ENCODE measurements at regions of chr20 and their contacts with region 1.

Region 1: DNA sequence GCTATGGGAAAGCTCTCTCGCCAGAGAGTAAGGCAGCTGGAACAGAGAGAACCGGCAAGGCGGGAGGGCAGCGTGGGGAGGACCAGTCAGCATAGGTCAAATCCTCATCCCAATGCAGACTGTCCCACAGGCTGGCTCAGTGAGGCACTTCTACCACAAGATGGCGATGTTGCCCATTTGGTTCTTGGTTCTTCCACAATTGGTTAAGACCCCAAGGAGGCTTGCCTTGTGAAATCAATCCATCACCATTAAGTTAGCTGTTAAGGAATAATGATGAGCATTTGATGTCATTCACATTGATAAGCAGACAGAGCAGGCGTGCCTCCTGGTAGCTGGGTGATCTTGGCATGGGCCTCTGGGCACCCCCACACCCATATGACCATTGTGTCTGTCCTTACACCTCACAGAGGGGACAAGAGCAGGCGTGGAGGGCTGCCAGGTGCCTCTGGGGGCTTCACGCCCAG is 2.4 kb downstream of the CSTL1 start:
- DNase-seq: peak; percentile 31 to 72
- ATAC-seq: peak; percentile 59 to 82 (median 75)
- H3K4me3 ChIP-seq: no peak overlapping the region
- H3K27ac ChIP-seq: no peak overlapping the region
- H3K4me1 ChIP-seq: peaks cover 0 to 3% (median 0%) of the 10 kb centered on the region in 9 donors
- H3K27me3 ChIP-seq: no peaks in the 10 kb centered on the region
- CTCF ChIP-seq: peak; percentile 70 to 92 (median 86)

Region 2: GRCh38 chr20:22346716-22347115 is 1095.2 kb before region 1 on chr20:
- intact Hi-C with region 1: loop called in 1 of 10 experiments (anchors 10 kb)
- DNase-seq: no peak
- ATAC-seq: no peak
- H3K4me3 ChIP-seq: no peak overlapping the region
- H3K27ac ChIP-seq: no peak overlapping the region
- H3K4me1 ChIP-seq: no peaks in the 10 kb centered on the region
- H3K27me3 ChIP-seq: peaks cover 0 to 60% (median 41%) of the 10 kb centered on the region in 7 donors
- CTCF ChIP-seq: no peak

Region 3: DNA sequence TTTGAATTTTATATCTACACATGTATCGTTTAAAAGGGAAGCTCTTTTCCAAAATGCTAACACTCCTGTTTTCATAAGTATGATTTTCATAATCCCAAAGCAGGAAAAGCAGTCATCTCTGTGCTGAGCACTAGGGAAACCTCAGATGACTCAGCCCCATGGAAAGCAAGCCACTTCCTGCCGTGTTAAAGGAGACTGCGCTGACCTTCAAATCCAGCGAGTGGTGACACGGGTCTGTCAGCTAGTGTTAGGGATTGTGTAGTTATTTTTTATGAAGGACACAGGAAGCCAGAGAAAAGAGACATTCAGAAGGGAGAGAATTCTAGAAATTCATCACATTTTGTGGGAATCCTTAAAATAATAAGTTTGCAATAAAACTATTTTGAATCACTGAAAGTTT is 298.8 kb before region 1 on chr20:
- intact Hi-C with region 1: no loop called
- DNase-seq: peak in 1 of 2 donors; percentile 82
- ATAC-seq: peak; percentile 87 to 97 (median 92)
- H3K4me3 ChIP-seq: no peak overlapping the region
- H3K27ac ChIP-seq: peak overlapping the region in 9 of 10 donors; percentile 57 to 95 (median 76)
- H3K4me1 ChIP-seq: peaks cover 10 to 72% (median 34%) of the 10 kb centered on the region in 9 donors
- H3K27me3 ChIP-seq: no peaks in the 10 kb centered on the region
- CTCF ChIP-seq: peak in 1 of 9 donors; percentile 11

Region 4: DNA sequence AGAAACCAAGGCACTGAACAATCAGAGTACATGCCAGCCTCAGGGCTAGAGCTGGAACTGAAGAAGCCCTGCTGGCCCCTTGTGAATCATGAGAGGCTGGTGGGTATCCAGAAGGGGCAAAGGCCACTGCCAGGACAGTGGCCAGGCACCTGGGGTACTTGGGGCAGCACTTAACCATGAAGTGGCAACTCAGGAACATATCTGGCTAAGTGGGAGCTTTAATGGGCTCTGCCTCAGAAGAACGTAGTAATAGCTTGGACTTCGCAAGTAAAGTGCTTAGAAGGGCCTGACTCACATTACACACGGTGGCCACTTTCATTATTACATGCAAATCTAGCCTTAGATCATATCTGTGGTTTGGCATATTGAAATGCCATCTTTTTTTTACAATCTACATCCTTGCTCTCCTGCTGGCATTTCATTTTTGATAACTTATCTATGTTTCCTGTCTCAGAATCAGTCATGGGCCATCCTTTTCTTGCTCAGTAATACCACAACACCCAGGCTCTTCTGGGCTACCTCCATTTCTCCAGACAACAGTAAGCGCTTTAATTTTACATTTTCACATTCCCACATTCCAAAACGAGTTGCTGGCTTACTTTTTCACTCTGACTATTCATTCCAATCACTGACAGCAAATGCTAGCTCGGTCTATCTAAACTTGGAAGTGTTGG is 42.2 kb before region 1 on chr20:
- intact Hi-C with region 1: no loop called
- DNase-seq: no peak
- ATAC-seq: no peak
- H3K4me3 ChIP-seq: no peak overlapping the region
- H3K27ac ChIP-seq: peak overlapping the region in 4 of 10 donors; percentile 11 to 63 (median 42)
- H3K4me1 ChIP-seq: peaks cover 2 to 66% (median 36%) of the 10 kb centered on the region in 9 donors
- H3K27me3 ChIP-seq: no peaks in the 10 kb centered on the region
- CTCF ChIP-seq: no peak

Region 5: GRCh38 chr20:23492292-23492691 is 50.4 kb after region 1 on chr20:
- intact Hi-C with region 1: loop called in 1 of 10 experiments (anchors 5 kb)
- DNase-seq: no peak
- ATAC-seq: no peak
- H3K4me3 ChIP-seq: no peak overlapping the region
- H3K27ac ChIP-seq: no peak overlapping the region
- H3K4me1 ChIP-seq: no peaks in the 10 kb centered on the region
- H3K27me3 ChIP-seq: peaks cover 0 to 4% (median 0%) of the 10 kb centered on the region in 7 donors
- CTCF ChIP-seq: no peak